ENCODE measurements at regions of chr3 and their contacts with region 1.

Region 1: DNA sequence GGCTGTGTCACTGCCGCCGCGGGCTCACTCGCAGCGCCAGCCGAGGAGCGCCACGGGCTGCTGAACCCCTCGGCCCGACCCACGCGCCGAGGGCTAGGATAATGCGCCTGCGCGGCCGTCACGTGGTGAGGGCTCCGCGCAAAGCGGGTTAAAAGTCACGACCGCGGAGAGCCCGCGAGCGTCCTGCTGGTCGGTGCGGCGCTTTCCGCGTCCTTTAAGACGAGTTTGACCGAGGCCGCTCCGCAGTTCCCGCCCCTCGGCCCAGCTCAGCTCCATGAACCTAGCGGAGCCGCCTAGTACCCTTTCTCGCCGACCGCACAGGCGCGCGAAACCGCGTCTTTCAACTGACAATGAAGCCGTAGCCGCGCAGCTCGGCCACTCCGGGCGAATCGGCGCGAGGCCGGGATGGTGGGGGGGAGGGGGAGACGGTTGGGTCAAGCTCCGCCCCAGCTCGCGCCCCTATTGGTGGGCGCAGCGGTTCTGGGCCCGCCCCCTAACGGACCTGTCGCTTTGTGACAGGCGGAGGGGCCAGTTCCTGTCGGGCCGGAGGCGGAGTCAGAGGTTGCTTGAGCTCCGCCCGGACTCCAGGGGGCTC is 636 bp upstream of the STT3B start:
- DNase-seq: peak; percentile 96 to 99
- H3K4me3 ChIP-seq: peak overlapping the region; percentile 76 to 80
- H3K27ac ChIP-seq: peak overlapping the region; percentile 97 to 98
- H3K4me1 ChIP-seq: peaks cover 2 to 13% of the 10 kb centered on the region in 2 donors
- H3K27me3 ChIP-seq: no peaks in the 10 kb centered on the region
- CTCF ChIP-seq: peak in 1 of 3 experiments; percentile 3

Region 2: GRCh38 chr3:30924763-30925162 is 607.3 kb before region 1 on chr3:
- intact Hi-C with region 1: loop called (anchors 5 kb)
- DNase-seq: peak in 1 of 2 donors; percentile 76
- H3K4me3 ChIP-seq: no peak overlapping the region
- H3K27ac ChIP-seq: peak overlapping the region; percentile 87 to 90
- H3K4me1 ChIP-seq: peaks cover 5 to 12% of the 10 kb centered on the region in 2 donors
- H3K27me3 ChIP-seq: no peaks in the 10 kb centered on the region
- CTCF ChIP-seq: no peak

Region 3: GRCh38 chr3:31768479-31769123 is 236.5 kb after region 1 on chr3:
- intact Hi-C with region 1: loop called (anchors 10 kb)
- DNase-seq: peak in 1 of 2 donors; percentile 69
- H3K4me3 ChIP-seq: no peak overlapping the region
- H3K27ac ChIP-seq: no peak overlapping the region
- H3K4me1 ChIP-seq: peaks cover 0 to 2% of the 10 kb centered on the region in 2 donors
- H3K27me3 ChIP-seq: no peaks in the 10 kb centered on the region
- CTCF ChIP-seq: peak; percentile 48 to 73 (median 53)

Region 4: GRCh38 chr3:32106280-32106928 is 574.3 kb after region 1 on chr3 and contains the start of gene GPD1L:
- intact Hi-C with region 1: loop called (anchors 1 kb)
- DNase-seq: peak; percentile 80 to 97
- H3K4me3 ChIP-seq: peak within 1 kb of the TSS; percentile 87 to 89
- H3K27ac ChIP-seq: peak within 1 kb of the TSS; percentile 70 to 75
- H3K4me1 ChIP-seq: peaks cover 6 to 24% of the 10 kb centered on the region in 2 donors
- H3K27me3 ChIP-seq: no peaks in the 10 kb centered on the region
- CTCF ChIP-seq: peak in 1 of 3 experiments; percentile 7
- total RNA-seq, gene GPD1L: 14.4 TPM